Tibial artery (tissue), 4 donors: ENCODE measurements at regions of chr3 and their contacts with region 1.

Region 1: DNA sequence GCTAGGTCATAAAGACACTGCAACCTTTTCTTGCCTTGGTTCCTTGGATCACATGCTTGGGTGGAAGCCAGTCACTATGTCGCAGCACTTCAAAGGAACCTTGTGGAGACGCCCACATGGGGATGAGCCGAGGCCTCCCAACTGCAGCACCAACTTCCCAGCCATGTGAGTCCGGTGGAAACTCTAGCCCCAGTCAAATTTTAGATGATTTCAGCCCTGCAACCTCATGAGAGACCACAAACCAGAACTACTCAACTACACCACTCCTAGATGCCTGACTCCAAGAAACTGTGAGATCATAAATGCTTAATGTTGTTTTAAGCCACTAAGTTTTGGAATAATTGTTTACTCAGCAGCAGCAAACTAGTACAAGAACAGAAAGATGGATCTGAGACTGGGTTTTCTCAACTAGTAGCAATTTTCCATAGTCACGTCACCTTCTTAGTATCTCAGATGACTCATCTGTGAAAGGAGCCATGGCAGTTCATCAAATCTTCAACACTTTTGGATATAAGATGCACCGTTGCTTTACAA is 86.5 kb downstream of the MB21D2 start:
- DNase-seq: no peak
- H3K4me3 ChIP-seq: no peak overlapping the region
- H3K27ac ChIP-seq: no peak overlapping the region
- H3K4me1 ChIP-seq: peaks cover 0 to 38% (median 31%) of the 10 kb centered on the region in 4 donors
- H3K27me3 ChIP-seq: no peaks in the 10 kb centered on the region
- CTCF ChIP-seq: no peak

Region 2: GRCh38 chr3:192917404-192918274 is 86.5 kb after region 1 on chr3 and contains the start of gene MB21D2:
- intact Hi-C with region 1: loop called (anchors 5 kb)
- DNase-seq: peak; percentile 74 to 88
- H3K4me3 ChIP-seq: peak within 1 kb of the TSS; percentile 72 to 84
- H3K27ac ChIP-seq: peak within 1 kb of the TSS; percentile 90 to 92
- H3K4me1 ChIP-seq: peaks cover 0 to 26% (median 4%) of the 10 kb centered on the region in 4 donors
- H3K27me3 ChIP-seq: no peaks in the 10 kb centered on the region
- CTCF ChIP-seq: no peak